ENCODE measurements at regions of chr3 and their contacts with region 1.

Region 1: DNA sequence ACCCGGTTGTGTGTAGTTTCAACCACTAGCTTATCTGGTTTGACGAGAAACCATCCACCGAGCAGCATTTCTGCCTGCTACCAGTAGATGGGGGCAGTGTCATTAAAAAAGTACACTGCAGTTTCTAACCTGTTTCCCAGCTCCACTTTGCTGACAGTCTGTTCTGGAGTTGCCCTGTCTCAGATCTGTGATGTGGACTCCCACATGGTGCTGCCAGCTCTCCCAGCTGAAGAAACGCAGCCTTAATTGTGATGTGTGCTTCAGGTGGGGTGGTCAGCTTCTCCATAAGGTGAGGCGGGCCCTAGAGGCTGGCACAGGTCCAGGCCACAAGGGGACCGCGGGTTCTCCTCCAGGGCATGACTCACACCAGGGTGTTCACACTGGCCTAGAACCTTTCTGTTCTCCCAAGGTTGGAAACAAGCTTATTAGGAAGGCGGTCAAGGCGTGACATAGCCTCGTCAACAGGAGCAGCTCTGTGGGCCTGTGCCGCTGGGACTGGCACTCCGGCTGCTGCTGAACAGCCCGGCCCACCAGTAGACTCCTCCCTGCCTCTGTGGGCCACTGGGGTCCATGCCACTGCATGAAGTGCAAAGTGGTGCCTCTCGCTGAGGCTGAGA is 2.9 kb upstream of the FAM43A start:
- DNase-seq: peak; percentile 77
- H3K4me3 Mint-ChIP-seq: no peak overlapping the region
- H3K27ac Mint-ChIP-seq: no peak overlapping the region
- H3K4me1 Mint-ChIP-seq: peaks cover 39% of the 10 kb centered on the region
- H3K27me3 Mint-ChIP-seq: peaks cover 24% of the 10 kb centered on the region

Region 2: DNA sequence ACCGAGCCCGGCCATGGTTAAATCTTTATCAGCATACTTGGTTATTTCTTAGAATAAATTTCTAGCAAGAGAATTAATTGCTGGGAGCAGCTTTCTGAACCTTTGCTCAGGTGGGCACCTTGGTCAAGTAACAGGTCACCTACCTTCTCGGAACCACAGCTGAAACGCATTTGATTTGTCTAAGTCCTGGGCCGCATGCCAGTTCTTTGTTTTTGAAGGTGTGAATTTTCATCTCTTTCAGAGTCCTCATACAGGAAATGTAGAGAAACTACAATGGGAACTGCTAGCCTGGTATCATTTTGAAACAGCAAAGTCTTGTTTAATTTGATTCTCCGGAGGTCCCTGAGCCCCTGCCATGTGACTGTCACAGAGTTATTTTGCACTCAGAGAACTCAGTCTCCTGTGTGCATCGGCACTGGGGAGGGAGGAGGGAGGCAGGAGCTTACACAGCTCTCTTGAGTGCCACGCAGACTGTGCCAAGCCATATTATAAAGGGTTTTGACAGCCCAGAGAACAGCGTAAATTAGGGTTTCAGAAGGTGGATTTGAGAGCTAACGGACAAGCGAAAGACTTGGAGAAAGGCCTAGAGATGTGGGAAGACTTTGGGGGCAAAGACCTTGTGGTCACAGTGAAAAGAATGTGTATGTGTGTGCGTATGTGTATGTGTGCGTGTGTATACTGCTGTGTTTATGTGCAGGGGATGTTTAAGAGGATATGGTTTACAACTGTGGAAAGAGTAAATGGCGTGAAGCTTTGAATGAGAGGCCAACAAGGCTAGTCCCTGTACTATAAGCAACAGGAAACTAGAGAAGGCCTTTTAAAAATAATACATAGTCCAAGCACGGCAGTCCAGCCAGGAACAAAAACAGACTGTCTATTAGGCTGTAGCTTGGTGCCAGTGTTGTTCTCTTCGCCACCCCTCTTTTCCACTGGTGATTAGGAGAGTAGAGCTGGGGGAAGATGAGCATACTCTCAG is 134.2 kb before region 1 on chr3:
- CTCF ChIA-PET with region 1: no interaction called
- POLR2A ChIA-PET with region 1: no interaction called
- intact Hi-C with region 1: no loop called
- DNase-seq: no peak
- H3K4me3 Mint-ChIP-seq: no peak overlapping the region
- H3K27ac Mint-ChIP-seq: no peak overlapping the region
- H3K4me1 Mint-ChIP-seq: no peaks in the 10 kb centered on the region
- H3K27me3 Mint-ChIP-seq: no peaks in the 10 kb centered on the region

Region 3: DNA sequence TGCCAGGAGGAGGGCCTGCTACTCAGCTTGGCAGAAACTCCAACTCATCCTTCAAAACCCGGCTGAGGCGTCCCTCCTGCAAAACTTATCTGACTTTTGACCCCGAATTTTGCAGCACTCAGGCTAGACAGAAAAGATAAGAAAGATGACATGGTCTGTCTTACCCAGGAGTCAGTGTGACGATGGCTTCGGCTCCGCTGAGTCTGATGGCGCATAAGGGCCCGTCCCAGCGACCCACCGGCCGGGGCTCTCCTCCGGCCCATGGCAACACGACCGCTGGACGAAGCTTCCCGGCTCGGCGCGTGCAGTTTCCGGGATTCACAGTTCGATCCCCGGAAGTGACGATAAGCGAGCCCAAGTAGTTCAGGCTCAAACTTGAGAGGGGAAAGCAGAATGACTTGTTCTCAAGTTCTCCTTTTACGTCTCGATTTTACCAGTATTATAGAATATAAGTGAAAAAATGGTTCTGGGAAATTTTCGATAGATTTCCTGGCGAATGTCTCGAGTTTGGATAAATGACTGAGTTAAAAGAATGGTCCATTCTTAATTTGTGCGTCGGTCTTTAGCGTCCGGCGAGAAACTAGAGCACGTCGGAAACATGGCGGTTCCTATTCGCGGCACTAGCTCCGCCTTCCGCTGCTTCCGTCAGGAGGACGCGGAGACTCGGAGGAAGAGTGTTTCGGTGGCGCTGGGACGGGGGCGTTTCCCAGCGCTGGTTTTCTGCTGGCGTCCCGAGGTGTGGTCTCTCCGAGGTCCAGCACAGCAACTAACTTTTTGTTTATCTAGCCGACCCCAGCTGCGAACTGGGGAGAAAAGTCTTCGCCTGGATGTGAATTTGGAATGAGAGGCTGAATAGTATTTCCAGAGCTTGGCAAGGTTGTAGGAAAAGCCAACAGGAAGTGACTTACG is 10.6 kb before region 1 on chr3 and contains the start of gene LSG1:
- CTCF ChIA-PET with region 1: interaction called, 131 read pairs
- POLR2A ChIA-PET with region 1: interaction called, 107 read pairs
- intact Hi-C with region 1: loop called (anchors 1 kb)
- DNase-seq: peak; percentile 93
- H3K4me3 Mint-ChIP-seq: peak within 1 kb of the TSS; percentile 98
- H3K27ac Mint-ChIP-seq: peak within 1 kb of the TSS; percentile 94
- H3K4me1 Mint-ChIP-seq: peaks cover 59% of the 10 kb centered on the region
- H3K27me3 Mint-ChIP-seq: peaks cover 2% of the 10 kb centered on the region
- total RNA-seq, gene LSG1: 34.6 to 35.3 TPM

Region 4: DNA sequence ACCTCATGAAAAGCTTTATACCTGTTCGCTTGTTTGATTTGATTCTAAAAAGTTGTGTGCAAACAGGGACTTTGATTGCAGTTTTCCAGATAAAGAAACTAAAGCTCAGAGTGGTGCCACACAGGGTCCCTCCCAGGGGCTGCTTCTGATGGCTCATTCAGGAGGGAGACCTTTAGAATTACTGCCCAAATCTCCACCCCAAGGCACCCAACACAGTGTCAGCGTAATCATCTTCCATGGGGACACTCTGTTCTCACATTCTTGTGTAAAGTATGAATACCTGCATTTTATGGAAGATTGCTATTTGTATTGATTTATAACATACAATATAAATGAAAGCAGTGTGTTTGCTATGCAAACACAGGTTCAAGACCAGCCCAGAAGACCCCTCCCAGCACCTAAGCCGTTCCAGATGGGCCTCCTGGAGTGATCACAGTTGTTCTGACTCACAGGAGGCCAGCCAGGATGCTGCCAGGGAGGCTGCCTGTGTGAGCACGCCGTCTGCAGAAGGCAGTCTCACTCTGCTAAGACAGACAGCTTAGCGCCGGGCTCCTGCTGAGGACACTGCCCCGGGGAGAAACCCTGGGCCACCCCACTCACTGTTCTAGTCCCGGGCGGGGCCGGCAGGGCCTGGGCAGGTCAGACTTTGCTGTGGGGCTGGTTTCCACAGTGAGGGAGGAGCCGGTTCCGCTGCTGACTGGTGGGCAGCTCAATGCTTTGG is 188.5 kb after region 1 on chr3:
- CTCF ChIA-PET with region 1: no interaction called
- POLR2A ChIA-PET with region 1: no interaction called
- intact Hi-C with region 1: no loop called
- DNase-seq: no peak
- H3K4me3 Mint-ChIP-seq: no peak overlapping the region
- H3K27ac Mint-ChIP-seq: no peak overlapping the region
- H3K4me1 Mint-ChIP-seq: no peaks in the 10 kb centered on the region
- H3K27me3 Mint-ChIP-seq: peaks cover 17% of the 10 kb centered on the region

Region 5: GRCh38 chr3:195106418-195106906 is 423.7 kb after region 1 on chr3:
- CTCF ChIA-PET with region 1: interaction called, 64 read pairs
- POLR2A ChIA-PET with region 1: no interaction called
- intact Hi-C with region 1: loop called (anchors 1 kb)
- DNase-seq: peak; percentile 71
- H3K4me3 Mint-ChIP-seq: no peak overlapping the region
- H3K27ac Mint-ChIP-seq: no peak overlapping the region
- H3K4me1 Mint-ChIP-seq: peaks cover 4% of the 10 kb centered on the region
- H3K27me3 Mint-ChIP-seq: no peaks in the 10 kb centered on the region

Region 6: DNA sequence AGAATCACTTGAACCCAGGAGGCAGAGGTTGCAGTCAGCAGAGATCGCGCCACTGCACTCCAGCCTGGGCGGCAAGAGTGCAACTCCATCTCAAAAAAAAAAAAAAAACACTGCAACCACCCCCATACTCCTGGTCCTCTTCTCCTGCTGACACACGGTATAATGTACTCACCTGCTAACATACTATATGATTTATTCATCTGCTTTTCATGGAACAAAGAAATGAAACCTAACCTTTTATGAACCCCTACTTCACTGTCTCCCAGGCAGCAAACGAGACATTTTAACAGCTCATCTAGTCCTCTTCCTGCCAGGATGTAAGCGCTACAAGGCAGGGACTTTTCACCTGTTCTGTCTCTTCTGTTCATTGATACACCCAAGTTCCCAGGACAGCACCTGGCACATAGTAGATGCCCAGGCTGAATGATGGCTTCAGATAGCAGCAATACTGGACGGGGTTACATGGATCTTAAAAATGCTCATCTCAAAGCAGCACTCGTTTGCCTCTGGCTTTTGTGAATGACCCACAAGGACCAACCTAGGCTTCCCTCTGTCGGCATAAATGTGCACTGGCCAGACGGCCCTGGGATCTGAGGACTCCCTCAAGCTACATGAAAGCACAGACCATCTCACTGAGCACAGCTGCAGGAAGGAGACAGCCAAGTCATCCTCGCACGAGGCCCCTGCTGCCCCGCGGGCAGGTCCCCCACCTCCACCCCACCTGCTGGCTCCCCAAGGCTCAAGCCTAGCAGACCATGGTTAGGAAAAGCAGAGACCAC is 567.9 kb after region 1 on chr3:
- CTCF ChIA-PET with region 1: interaction called, 3 read pairs
- POLR2A ChIA-PET with region 1: no interaction called
- intact Hi-C with region 1: loop called (anchors 2 kb)
- DNase-seq: no peak
- H3K4me3 Mint-ChIP-seq: no peak overlapping the region
- H3K27ac Mint-ChIP-seq: no peak overlapping the region
- H3K4me1 Mint-ChIP-seq: peaks cover 16% of the 10 kb centered on the region
- H3K27me3 Mint-ChIP-seq: no peaks in the 10 kb centered on the region

Region 7: DNA sequence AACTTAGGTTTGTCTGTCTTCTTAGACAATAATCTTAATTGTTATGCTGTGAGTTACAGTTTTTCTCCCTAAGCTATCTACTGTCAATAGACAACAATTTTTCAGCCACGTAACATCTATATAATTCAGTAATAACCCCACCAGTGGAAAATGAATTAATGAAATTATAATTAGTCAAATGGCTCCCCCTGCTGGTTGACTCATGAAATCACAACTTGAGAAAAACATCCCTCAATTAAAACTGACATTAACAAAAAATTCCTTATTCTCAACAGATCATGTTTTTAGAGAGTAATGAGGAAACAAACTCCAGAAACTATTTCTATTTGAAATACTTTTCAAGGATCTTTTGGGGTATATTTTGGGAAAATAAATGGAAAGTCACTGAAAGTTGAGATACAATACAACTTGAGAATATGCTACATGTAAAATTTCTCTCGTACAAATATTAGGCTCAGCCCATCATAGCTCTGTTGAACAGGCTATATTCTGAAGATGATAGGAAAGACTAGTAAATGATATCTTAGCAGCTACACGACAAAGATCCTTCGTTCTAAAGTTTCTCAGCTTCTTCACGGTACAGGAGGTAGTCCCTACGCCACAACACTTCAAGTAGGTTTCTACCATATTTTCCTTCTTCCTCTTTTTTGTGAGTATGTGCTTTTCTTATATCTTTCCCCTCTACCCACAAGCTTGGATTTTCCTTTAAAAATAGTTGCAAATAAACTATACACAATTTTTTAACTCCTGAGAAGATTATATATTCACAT is 839.6 kb after region 1 on chr3:
- CTCF ChIA-PET with region 1: no interaction called
- POLR2A ChIA-PET with region 1: no interaction called
- intact Hi-C with region 1: loop called (anchors 5 kb)
- DNase-seq: no peak
- H3K4me3 Mint-ChIP-seq: no peak overlapping the region
- H3K27ac Mint-ChIP-seq: peak overlapping the region; percentile 30
- H3K4me1 Mint-ChIP-seq: peaks cover 37% of the 10 kb centered on the region
- H3K27me3 Mint-ChIP-seq: no peaks in the 10 kb centered on the region